ENCODE measurements at regions of chrX and their contacts with region 1.

Region 1: GRCh38 chrX:22577181-22577580 is 304.5 kb downstream of the CBLL2 start:
- DNase-seq: no peak
- ATAC-seq: no peak
- H3K4me3 ChIP-seq: no peak overlapping the region
- H3K27ac ChIP-seq: no peak overlapping the region
- H3K4me1 ChIP-seq: no peaks in the 10 kb centered on the region
- H3K27me3 ChIP-seq: no peaks in the 10 kb centered on the region

Region 2: DNA sequence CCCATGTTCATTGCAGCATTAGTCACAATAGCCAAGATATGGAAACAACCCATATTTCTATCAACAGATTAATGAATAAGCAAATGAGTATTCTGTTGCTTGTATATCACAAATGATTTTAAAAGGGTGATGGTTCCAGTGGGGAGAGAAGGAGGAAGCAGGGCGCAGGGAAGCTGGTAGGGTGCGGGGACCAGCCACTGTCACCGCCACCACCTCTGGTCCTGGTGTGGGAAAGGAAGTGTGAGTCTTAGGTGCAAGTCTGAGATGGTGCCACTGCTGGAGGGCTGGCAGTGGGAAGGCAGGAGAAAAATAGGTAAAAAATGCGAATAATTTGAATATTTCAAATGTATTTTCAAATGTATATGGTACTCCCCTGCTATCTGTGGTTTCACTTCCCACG is 135.8 kb after region 1 on chrX:
- intact Hi-C with region 1: loop called in 1 of 2 experiments (anchors 5 kb)
- DNase-seq: no peak
- ATAC-seq: no peak
- H3K4me3 ChIP-seq: no peak overlapping the region
- H3K27ac ChIP-seq: no peak overlapping the region
- H3K4me1 ChIP-seq: no peaks in the 10 kb centered on the region
- H3K27me3 ChIP-seq: no peaks in the 10 kb centered on the region

Measured in aorta (tissue), 5 donors.